ENCODE measurements at regions of chr3 and their contacts with region 1.

Region 1: GRCh38 chr3:196081791-196082618 is at the start of gene TFRC:
- DNase-seq: peak; percentile 90
- H3K4me3 ChIP-seq: peak within 1 kb of the TSS; percentile 68 to 97 (median 78)
- H3K27ac ChIP-seq: peak within 1 kb of the TSS; percentile 81
- H3K4me1 ChIP-seq: peaks cover 24% of the 10 kb centered on the region
- H3K27me3 ChIP-seq: no peaks in the 10 kb centered on the region
- CTCF ChIP-seq: no peak
- total RNA-seq, gene TFRC: 252 to 547 TPM

Region 2: GRCh38 chr3:196042673-196043072 is 39.3 kb before region 1 on chr3:
- CTCF ChIA-PET with region 1: no interaction called
- dilution Hi-C with region 1: no loop called
- in situ Hi-C with region 1: no loop called
- intact Hi-C with region 1: no loop called
- DNase-seq: no peak
- H3K4me3 ChIP-seq: no peak overlapping the region
- H3K27ac ChIP-seq: no peak overlapping the region
- H3K4me1 ChIP-seq: no peaks in the 10 kb centered on the region
- H3K27me3 ChIP-seq: no peaks in the 10 kb centered on the region
- CTCF ChIP-seq: no peak

Region 3: DNA sequence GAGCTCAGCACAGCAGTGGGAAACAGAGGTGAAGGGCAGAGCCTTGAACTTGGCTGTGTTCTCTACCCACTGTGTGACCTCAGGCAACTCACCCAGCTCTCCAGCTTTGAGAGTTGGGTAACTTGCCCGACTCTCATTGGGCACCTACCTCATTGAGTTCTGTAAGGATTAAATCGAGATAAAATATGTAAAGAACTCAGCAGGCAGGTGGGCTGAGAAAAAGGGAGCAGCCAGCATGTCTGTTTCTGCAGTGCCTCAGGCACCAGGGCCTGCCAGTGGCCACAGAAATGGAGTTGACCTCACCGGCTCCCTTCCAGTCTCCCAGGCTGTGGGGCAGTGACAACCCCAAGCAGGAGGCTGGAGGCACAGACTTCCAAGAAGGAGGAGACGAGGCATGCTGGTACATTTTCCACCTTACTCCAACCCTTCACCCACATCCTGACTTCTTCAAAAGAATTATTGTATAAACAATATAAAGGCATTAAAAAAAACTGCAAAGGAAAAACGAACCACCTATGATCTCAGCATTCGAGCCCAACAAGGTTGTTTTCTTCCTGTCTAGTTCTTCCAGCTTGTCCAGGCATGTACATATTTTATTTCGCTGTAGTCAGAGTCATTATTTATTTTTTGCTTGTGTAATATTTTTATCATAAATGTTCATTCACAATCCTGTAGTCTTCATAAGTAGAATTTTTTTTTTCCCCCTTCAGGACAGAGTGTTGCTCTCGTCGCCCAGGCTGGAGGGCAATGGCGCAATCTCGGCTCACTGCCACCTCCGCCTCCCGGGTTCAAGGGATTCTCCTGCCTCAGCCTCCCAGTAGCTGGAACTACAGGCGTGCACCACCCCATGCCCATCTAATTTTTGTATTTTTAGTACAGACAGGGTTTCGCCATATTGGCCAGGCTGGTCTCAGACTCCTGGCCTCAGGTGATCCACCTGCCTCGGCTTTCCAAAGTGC is 54.3 kb after region 1 on chr3:
- CTCF ChIA-PET with region 1: no interaction called
- dilution Hi-C with region 1: no loop called
- in situ Hi-C with region 1: no loop called
- intact Hi-C with region 1: loop called (anchors 1 kb)
- DNase-seq: peak; percentile 97
- H3K4me3 ChIP-seq: peak overlapping the region in 2 of 3 experiments; percentile 17
- H3K27ac ChIP-seq: peak overlapping the region; percentile 66
- H3K4me1 ChIP-seq: peaks cover 39% of the 10 kb centered on the region
- H3K27me3 ChIP-seq: no peaks in the 10 kb centered on the region
- CTCF ChIP-seq: no peak